Activated naive CD4-positive, alpha-beta T cell treated with anti-CD3 and anti-CD28 coated beads, Interleukin-2, amount 10 ng/mL, durations not matched to agents 7 days and 5 days (primary cell): ENCODE measurements at regions of chr7 and their contacts with region 1.

Region 1: DNA sequence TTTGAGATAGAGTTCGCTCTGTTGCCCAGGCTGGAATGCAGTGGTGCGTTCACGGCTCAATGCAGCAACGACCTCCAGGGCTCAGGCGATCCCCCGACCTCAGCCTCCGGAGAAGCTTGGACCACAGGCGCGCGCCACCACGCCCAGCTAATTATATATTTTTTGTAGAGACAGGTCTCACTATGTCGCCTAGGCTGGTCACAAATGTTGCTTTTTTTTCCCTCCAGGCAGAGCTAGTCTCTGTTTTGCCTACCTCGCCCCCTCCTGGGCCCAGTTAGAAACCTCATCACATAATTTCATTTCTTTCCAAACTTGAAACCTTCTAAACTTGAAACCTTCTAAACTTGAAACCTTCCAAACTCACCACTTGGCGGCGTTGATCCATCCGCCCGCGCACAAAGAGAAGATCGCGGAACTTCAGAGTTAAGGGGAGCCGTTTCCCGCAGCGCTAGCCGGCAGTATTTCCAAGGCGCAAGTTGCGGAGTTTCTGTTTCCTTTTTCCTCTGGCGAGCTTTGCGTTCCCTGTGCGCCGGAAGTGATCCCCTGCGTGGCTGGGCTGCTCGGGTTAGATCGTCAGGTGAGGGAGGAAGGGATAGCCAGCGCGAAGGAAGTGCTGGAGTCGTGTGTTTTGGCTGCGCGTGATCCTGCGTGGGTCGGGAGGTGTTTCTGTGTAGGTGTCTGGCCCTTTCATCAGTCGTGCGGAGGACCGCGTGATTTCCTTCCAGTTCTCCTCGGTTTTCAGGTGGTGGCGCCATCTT is at the start of gene SSBP1:
- DNase-seq: peak; percentile 94
- H3K4me3 Mint-ChIP-seq: peak within 1 kb of the TSS; percentile 94
- H3K27ac Mint-ChIP-seq: peak within 1 kb of the TSS; percentile 96
- H3K4me1 Mint-ChIP-seq: peaks cover 33% of the 10 kb centered on the region
- H3K27me3 Mint-ChIP-seq: no peaks in the 10 kb centered on the region

Region 2: DNA sequence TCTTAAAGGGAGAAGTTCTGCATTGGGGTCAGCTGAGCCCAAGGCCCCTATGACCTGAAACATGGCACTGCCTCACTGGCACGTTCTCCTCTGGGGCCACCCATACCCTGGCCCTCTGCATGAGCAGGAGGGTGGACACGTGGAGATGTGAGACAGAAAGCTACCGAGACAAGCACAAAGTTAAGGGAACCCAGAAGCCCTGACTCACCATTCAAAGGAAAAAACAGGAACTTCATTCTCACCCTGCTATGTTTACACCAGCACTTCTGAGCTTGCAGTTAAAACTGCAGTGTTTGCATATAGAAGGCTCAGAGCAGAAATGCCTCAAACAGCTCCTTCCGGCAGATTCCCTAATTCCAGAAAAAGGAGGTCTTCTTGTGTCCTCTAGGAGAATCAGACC is 77.8 kb before region 1 on chr7:
- CTCF ChIA-PET with region 1: interaction called, 52 read pairs
- DNase-seq: no peak
- H3K4me3 Mint-ChIP-seq: no peak overlapping the region
- H3K27ac Mint-ChIP-seq: peak overlapping the region; percentile 55
- H3K4me1 Mint-ChIP-seq: peaks cover 25% of the 10 kb centered on the region
- H3K27me3 Mint-ChIP-seq: no peaks in the 10 kb centered on the region

Region 3: GRCh38 chr7:141685285-141686023 is 52.6 kb before region 1 on chr7:
- CTCF ChIA-PET with region 1: no interaction called
- DNase-seq: no peak
- H3K4me3 Mint-ChIP-seq: no peak overlapping the region
- H3K27ac Mint-ChIP-seq: no peak overlapping the region
- H3K4me1 Mint-ChIP-seq: peaks cover 2% of the 10 kb centered on the region
- H3K27me3 Mint-ChIP-seq: no peaks in the 10 kb centered on the region

Region 4: DNA sequence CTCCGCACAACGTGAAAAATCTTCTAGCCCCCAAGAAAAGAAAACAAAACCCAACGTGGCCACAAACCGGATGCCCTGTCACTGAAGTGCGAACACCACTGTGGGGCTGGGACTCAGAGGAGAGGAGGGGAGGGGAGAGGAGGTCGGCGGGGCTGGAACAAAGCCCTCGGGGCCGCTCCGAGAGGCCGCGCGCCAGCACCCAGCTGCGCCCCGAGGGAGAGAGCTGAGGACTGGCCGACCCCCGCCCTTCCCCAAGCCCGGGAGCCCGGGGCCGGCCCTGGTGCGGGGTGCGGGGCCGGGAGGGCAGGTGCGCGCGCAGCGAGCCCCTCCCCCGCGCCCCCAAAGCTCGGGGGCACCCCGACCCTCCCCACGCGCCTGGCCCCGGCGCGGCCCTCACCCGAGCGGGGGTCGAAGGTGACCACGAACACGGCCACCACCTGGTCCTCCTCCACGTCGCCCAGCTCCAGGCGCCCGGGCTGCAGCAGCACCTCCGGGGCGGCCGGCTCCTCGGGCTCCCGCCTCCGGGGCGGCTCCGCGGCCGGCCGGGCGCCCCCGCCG is 36.4 kb before region 1 on chr7:
- CTCF ChIA-PET with region 1: interaction called, 17 read pairs
- DNase-seq: peak; percentile 85
- H3K4me3 Mint-ChIP-seq: peak overlapping the region; percentile 76
- H3K27ac Mint-ChIP-seq: peak overlapping the region; percentile 73
- H3K4me1 Mint-ChIP-seq: peaks cover 31% of the 10 kb centered on the region
- H3K27me3 Mint-ChIP-seq: peaks cover 17% of the 10 kb centered on the region

Region 5: DNA sequence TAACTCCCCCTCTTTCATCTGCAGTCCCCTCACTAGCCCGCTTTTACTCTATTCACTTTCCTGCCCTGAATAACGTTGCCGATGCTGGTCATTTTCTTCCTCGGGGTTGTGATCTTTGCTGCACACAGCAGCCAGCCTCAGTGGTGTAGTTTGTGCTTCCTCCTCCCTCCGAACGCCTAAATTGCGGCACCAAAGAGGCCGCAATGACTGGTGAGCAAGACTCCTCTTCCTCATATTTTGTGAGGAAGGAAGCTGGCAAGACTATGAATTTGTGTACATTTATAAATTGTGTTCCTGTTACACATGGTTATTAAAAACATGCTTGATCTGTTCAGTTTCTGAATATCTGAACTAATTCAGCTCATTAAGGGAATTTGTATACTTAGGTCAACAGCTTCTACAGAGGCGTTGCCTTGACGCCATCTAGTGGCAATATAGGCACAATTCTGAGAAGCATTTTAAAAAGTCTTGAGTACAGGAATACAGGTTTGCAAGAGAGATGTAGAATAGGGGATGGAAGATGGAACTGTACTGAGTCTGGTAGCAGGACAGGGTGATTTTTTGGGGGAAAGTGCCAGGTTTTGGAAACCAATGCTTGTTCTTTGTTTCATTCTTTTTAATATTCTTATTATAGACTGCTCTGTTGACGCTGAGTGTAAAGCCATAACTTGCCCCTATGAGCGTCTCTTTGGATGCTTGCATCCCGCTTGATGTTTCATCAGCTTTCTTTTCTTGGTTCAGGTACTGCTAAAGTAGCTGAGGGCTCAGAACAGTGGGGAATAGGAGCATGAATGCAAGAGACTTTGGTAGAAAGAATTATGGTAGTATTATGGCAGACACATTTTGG is 47.9 kb after region 1 on chr7:
- CTCF ChIA-PET with region 1: interaction called, 11 read pairs
- DNase-seq: peak; percentile 31
- H3K4me3 Mint-ChIP-seq: no peak overlapping the region
- H3K27ac Mint-ChIP-seq: no peak overlapping the region
- H3K4me1 Mint-ChIP-seq: no peaks in the 10 kb centered on the region
- H3K27me3 Mint-ChIP-seq: no peaks in the 10 kb centered on the region